Motor neuron (in vitro differentiated cells): ENCODE measurements at regions of chr9 and their contacts with region 1.

Region 1: GRCh38 chr9:78921341-78921740 is 624.4 kb downstream of the PSAT1 start:
- ATAC-seq: no peak
- H3K4me3 ChIP-seq: no peak overlapping the region
- H3K27ac ChIP-seq: no peak overlapping the region
- H3K4me1 ChIP-seq: no peaks in the 10 kb centered on the region

Region 2: DNA sequence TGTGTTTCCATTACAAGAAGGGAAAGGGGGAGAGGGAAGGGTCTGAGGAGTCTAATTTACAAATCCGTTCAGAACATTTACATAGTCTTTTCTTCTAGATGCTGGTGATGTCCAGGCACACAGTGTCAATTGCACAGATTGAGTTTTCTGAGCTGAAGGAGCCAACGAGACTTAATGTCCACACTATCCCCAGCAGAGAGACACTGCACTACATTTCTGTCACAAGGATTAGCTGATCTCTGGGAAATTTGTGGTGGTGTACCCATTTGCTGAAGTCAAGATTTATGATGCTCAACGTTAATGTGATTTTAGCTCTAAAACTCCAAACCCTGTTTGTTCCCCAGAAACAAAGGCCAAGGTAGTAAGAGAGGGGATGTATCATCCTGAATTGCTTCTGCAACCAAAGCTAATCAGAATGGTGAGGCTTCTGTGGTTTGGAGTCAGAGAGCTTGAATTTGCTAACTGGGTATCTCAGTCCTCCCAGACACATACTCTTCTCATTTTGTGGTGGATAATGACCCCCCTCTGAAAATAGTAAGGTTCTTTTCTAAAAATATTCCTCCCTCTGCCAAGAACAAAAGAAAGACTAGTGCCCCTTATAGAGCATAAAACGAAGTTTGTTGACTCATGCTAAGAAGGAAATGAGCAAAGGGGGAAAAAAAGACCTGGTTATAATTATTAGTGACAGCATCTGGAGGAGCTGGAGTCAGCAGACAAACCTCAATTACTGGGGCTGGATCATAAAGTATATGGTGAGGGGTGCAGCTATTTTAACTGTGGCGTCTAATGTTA is 207.5 kb before region 1 on chr9:
- in situ Hi-C with region 1: no loop called
- ATAC-seq: peak in 2 of 8 experiments; percentile 13 to 26
- H3K4me3 ChIP-seq: no peak overlapping the region
- H3K27ac ChIP-seq: no peak overlapping the region
- H3K4me1 ChIP-seq: peaks cover 10 to 24% of the 10 kb centered on the region in 2 donors

Region 3: GRCh38 chr9:78820855-78821822 is 100.2 kb before region 1 on chr9:
- in situ Hi-C with region 1: loop called in 1 of 9 experiments (anchors 25 kb)
- ATAC-seq: peak in 3 of 8 experiments; percentile 56 to 74 (median 61)
- H3K4me3 ChIP-seq: no peak overlapping the region
- H3K27ac ChIP-seq: no peak overlapping the region
- H3K4me1 ChIP-seq: no peaks in the 10 kb centered on the region